Body of pancreas (tissue), 4 donors: ENCODE measurements at regions of chr16 and their contacts with region 1.

Region 1: DNA sequence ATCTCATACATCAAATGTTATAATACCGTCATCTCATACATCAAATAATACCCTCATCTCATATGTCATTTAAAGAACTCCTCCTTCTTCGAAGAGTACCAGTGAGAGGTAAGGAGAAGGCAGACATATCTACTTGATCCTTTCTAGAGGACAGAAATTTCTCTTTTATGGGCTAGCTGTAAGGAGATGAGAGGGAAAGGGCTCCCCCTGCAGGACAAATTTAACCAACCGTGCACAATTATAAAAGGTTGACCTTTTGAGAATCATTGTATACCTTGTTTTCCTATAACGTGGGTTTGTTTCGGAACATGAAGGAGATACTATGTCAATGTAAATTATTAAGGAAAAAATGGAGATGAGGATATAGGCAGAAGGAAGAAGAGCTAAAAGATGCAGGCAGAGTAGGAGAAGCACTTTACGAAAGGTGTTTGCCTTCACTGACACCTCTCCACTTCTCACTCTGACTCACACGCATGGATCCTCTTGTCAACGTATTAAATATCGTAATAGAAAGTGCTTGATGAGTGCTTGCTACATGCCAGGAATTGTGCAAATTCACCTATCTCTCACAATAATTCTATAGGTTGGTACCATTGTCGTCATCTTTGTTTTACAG is 465.9 kb upstream of the ERCC4 start:
- DNase-seq: peak; percentile 25 to 60 (median 46)
- ATAC-seq: no peak
- H3K4me3 ChIP-seq: no peak overlapping the region
- H3K27ac ChIP-seq: no peak overlapping the region
- H3K4me1 ChIP-seq: peaks cover 9% of the 10 kb centered on the region
- H3K27me3 ChIP-seq: no peaks in the 10 kb centered on the region
- CTCF ChIP-seq: peak; percentile 27 to 61 (median 57)
- POLR2A ChIP-seq: no peak

Region 2: GRCh38 chr16:12896562-12896961 is 557.5 kb before region 1 on chr16:
- intact Hi-C with region 1: loop called (anchors 10 kb)
- DNase-seq: peak in 3 of 4 donors; percentile 12 to 21 (median 19)
- ATAC-seq: no peak
- H3K4me3 ChIP-seq: no peak overlapping the region
- H3K27ac ChIP-seq: no peak overlapping the region
- H3K4me1 ChIP-seq: peaks cover 10% of the 10 kb centered on the region
- H3K27me3 ChIP-seq: no peaks in the 10 kb centered on the region
- CTCF ChIP-seq: peak; percentile 30 to 70 (median 59)
- POLR2A ChIP-seq: no peak